ENCODE measurements at regions of chr5 and their contacts with region 1.

Region 1: GRCh38 chr5:73565139-73565968 is at the starts of genes ANKRA2 and UTP15:
- DNase-seq: peak; percentile 100
- ATAC-seq: peak; percentile 99 to 100 (median 99)
- H3K4me3 ChIP-seq: peak within 1 kb of the TSS; percentile 82
- H3K27ac ChIP-seq: peak within 1 kb of the TSS; percentile 96
- H3K4me1 ChIP-seq: peaks cover 22% of the 10 kb centered on the region
- H3K27me3 ChIP-seq: no peaks in the 10 kb centered on the region
- CTCF ChIP-seq: no peak
- total RNA-seq, gene ANKRA2: 7.8 to 12.2 (median 9.0) TPM
- total RNA-seq, gene UTP15: 12.4 to 21.2 (median 17.6) TPM

Region 2: GRCh38 chr5:72871366-72872024 is 693.9 kb before region 1 on chr5:
- intact Hi-C with region 1: loop called in 1 of 2 experiments (anchors 10 kb)
- DNase-seq: no peak
- ATAC-seq: peak; percentile 68 to 73 (median 71)
- H3K4me3 ChIP-seq: no peak overlapping the region
- H3K27ac ChIP-seq: peak overlapping the region; percentile 65
- H3K4me1 ChIP-seq: peaks cover 17% of the 10 kb centered on the region
- H3K27me3 ChIP-seq: no peaks in the 10 kb centered on the region
- CTCF ChIP-seq: no peak

Region 3: DNA sequence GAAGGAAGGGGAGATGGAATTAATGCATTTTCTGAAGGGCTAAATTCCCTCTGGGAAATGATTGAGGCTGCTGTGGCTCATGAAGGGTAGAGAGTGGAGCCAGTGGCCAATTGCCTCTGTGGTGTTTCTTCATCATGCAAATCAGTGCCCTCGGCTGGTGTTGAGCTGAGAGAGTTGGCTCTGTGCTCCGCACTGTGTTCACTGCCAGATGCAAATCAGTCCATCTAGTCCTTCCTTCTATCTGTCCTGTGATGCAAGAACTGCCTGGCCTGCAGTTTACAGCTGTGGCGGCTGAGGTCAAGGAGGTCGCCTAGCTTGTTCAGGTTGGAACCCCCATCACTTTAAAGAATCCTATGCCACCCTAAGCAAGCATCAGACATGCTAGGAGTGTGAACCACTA is 439.0 kb before region 1 on chr5:
- intact Hi-C with region 1: no loop called
- DNase-seq: no peak
- ATAC-seq: no peak
- H3K4me3 ChIP-seq: no peak overlapping the region
- H3K27ac ChIP-seq: no peak overlapping the region
- H3K4me1 ChIP-seq: no peaks in the 10 kb centered on the region
- H3K27me3 ChIP-seq: peaks cover 0 to 10% (median 0%) of the 10 kb centered on the region in 3 donors
- CTCF ChIP-seq: no peak

Region 4: DNA sequence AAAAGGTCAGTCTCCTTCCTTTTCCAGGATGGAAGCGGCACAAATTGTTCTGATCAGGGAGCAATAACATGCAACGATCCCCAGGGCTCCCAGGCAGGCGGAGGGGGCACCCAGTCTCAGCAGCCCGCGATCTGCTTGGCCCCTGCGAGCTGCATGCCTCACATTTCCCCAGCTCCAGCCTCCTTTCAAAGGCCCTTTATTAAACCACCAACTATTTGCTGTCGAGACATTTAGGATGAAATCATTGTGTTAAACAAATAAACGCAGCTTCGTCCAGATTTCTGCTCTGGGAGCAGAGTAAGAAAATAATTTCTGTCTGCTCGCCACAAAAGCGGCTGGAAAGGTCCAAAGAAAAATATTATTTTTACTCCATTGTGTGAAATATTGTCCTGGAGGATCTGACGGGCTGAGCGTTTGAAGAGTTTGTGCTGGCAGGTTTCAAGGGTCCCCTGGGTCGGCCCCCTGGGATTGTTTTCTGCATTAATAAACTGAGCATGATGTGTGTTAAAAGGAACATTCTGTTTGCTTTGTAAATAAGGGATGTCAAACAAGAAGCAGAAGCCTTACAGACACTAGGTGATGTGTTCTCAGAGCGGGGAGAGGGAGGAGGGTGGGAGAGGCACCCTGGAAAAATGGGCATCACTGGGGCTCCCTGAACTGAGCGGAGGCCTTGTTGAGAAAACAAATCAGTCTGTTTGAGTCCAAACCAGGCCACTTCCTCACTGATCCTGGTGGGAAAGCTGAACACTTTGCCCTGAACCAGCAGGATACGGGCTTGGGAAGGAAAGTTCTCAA is 226.9 kb before region 1 on chr5:
- intact Hi-C with region 1: no loop called
- DNase-seq: no peak
- ATAC-seq: no peak
- H3K4me3 ChIP-seq: no peak overlapping the region
- H3K27ac ChIP-seq: no peak overlapping the region
- H3K4me1 ChIP-seq: no peaks in the 10 kb centered on the region
- H3K27me3 ChIP-seq: peaks cover 13 to 45% (median 16%) of the 10 kb centered on the region in 3 donors
- CTCF ChIP-seq: no peak

Region 5: DNA sequence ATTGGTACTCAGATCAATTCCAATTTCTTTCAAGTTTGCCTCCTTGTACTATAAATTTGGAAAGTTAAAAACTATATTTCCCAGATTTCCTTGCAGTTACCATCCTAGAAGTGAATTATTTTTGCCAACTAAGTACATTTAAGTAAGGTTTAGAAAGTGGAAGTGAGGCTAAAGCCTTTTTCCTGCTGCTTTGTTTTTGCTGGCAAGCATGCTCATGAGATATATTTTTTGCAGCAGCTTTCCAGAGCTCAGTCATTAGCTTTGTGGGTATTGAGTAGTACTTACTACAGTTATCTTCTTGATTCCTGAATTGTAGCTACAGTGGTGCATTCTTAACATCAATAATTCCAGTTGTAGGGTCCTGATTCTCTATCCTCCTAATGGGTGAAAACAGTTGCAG is 70.6 kb before region 1 on chr5:
- intact Hi-C with region 1: no loop called
- DNase-seq: no peak
- ATAC-seq: no peak
- H3K4me3 ChIP-seq: no peak overlapping the region
- H3K27ac ChIP-seq: no peak overlapping the region
- H3K4me1 ChIP-seq: peaks cover 16% of the 10 kb centered on the region
- H3K27me3 ChIP-seq: peaks cover 0 to 14% (median 0%) of the 10 kb centered on the region in 3 donors
- CTCF ChIP-seq: no peak

Region 6: DNA sequence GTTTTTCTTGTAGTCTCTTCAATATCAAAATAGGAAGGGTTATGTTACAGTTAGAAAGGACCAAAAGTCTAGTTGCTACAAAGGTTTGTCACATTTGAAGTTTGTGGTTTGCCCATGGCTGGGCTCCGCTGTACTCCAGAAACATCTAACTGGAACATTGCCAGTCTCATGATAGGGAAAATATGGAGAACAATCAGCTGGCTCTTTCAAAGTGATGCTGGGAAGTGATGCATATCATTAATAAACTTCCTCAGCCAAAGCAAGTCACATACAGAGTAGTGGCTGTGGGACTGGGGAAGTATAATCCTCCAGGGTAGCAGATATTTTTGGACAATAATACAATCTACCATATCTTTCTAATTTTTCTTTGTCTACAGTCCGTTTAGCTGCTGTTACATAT is 58.3 kb before region 1 on chr5:
- intact Hi-C with region 1: loop called in 1 of 2 experiments (anchors 10 kb)
- DNase-seq: no peak
- ATAC-seq: no peak
- H3K4me3 ChIP-seq: no peak overlapping the region
- H3K27ac ChIP-seq: no peak overlapping the region
- H3K4me1 ChIP-seq: no peaks in the 10 kb centered on the region
- H3K27me3 ChIP-seq: no peaks in the 10 kb centered on the region
- CTCF ChIP-seq: no peak

Region 7: GRCh38 chr5:73519531-73520283 is 45.6 kb before region 1 on chr5:
- intact Hi-C with region 1: no loop called
- DNase-seq: peak; percentile 24 to 52
- ATAC-seq: peak; percentile 68 to 96 (median 88)
- H3K4me3 ChIP-seq: no peak overlapping the region
- H3K27ac ChIP-seq: no peak overlapping the region
- H3K4me1 ChIP-seq: no peaks in the 10 kb centered on the region
- H3K27me3 ChIP-seq: no peaks in the 10 kb centered on the region
- CTCF ChIP-seq: peak; percentile 67